Gastrocnemius medialis (tissue), 4 donors: ENCODE measurements at regions of chr7 and their contacts with region 1.

Region 1: GRCh38 chr7:73718905-73719805 is at the start of gene STX1A:
- DNase-seq: peak; percentile 36 to 62
- ATAC-seq: peak; percentile 76 to 83
- H3K4me3 ChIP-seq: peak within 1 kb of the TSS; percentile 65 to 95 (median 81)
- H3K27ac ChIP-seq: peak within 1 kb of the TSS; percentile 43 to 78 (median 60)
- H3K4me1 ChIP-seq: peaks cover 10 to 28% of the 10 kb centered on the region in 2 donors
- H3K27me3 ChIP-seq: no peaks in the 10 kb centered on the region
- CTCF ChIP-seq: no peak
- POLR2A ChIP-seq: peak; percentile 51 to 72
- total RNA-seq, gene STX1A: 0.83 to 8.1 (median 3.2) TPM

Region 2: GRCh38 chr7:73683056-73683964 is 35.8 kb before region 1 on chr7 and contains the starts of genes BUD23 and DNAJC30:
- in situ Hi-C with region 1: no loop called
- intact Hi-C with region 1: loop called (anchors 5 kb)
- DNase-seq: peak; percentile 98
- ATAC-seq: peak; percentile 98
- H3K4me3 ChIP-seq: peak within 1 kb of the TSS; percentile 91 to 99 (median 94)
- H3K27ac ChIP-seq: peak within 1 kb of the TSS; percentile 83 to 96 (median 92)
- H3K4me1 ChIP-seq: peaks cover 36% of the 10 kb centered on the region in 2 donors
- H3K27me3 ChIP-seq: no peaks in the 10 kb centered on the region
- CTCF ChIP-seq: peak in 1 of 5 experiments; percentile 27
- POLR2A ChIP-seq: peak; percentile 84 to 89
- total RNA-seq, gene BUD23: 83.9 to 128 (median 114) TPM
- total RNA-seq, gene DNAJC30: 3.9 to 10.5 (median 5.6) TPM